ENCODE measurements at regions of chr12 and their contacts with region 1.

Region 1: GRCh38 chr12:55817346-55818139 is at the starts of genes ORMDL2 and SARNP:
- DNase-seq: peak; percentile 97
- H3K4me3 Mint-ChIP-seq: no peak within 1 kb of the TSS
- H3K27ac Mint-ChIP-seq: no peak within 1 kb of the TSS
- H3K4me1 Mint-ChIP-seq: peaks cover 33% of the 10 kb centered on the region
- H3K27me3 Mint-ChIP-seq: no peaks in the 10 kb centered on the region
- total RNA-seq, gene ORMDL2: 58.9 and 61.2 TPM in 2 replicates
- total RNA-seq, gene SARNP: 70.7 and 75.1 TPM in 2 replicates

Region 2: DNA sequence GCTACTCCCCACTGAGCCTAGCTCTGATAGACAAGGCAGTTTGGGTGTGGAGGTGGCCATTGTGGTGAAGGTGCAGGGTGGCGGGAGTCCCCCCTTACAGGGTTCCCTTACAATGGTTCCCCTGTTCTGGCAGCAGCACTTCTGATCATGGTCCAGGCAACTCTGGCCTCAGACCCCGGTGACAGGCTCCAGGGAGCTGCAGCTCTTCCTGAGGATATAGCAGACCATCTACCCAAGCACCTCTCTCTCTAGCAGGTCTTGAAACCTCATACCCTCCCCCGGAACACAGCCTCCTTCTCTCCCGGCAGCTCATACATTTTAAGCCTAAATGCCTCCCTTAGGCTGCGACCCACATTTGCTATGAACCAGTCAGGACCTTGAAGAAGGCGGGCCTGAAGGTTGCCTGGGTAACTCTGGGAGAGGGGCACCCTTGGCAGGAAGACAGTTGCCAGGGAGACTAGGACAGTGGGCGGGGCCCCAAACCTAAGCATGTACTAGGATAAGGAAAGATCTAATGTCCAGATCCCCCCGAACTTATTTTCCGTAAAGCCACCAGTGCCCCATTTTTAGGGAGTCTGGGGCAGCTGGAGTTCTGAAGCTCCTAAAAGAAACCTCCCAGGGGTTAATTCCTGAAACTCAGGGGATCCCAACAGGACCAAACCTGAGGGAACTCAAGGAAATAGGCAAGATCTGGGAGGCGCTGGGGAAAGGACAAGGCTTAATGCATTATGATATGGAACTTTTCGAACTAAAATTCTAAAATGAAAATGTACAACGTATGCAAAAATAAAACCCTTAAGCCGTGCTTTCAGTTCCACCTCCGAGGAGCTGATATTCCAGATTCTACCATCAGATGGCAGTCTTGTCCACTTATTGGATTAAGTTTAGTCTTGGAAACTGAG is 79.2 kb before region 1 on chr12:
- intact Hi-C with region 1: loop called (anchors 1 kb)
- DNase-seq: peak; percentile 73
- H3K4me3 Mint-ChIP-seq: peak overlapping the region; percentile 79
- H3K27ac Mint-ChIP-seq: peak overlapping the region; percentile 73
- H3K4me1 Mint-ChIP-seq: peaks cover 44% of the 10 kb centered on the region
- H3K27me3 Mint-ChIP-seq: peaks cover 3% of the 10 kb centered on the region

Region 3: DNA sequence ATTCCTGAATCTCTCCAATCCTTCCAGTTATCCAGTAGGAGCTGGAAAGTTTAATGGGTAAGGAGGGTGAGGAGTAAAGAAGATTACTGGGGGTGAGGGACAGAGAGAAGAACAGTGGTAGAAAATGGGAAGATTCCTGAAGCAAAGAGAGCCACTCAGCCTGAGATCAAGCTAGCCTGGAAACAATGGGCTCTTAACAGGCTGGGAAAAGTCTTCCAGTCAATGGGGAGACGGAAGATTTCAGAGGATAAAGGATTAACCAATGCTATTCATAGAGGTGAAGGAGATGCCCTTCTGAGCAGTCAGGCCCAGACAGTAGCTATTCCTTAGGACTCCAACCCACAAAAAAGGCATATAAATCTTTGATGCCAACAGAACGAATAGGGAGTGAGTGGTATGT is 59.8 kb before region 1 on chr12:
- intact Hi-C with region 1: no loop called
- DNase-seq: no peak
- H3K4me3 Mint-ChIP-seq: no peak overlapping the region
- H3K27ac Mint-ChIP-seq: peak overlapping the region; percentile 6
- H3K4me1 Mint-ChIP-seq: peaks cover 11% of the 10 kb centered on the region
- H3K27me3 Mint-ChIP-seq: no peaks in the 10 kb centered on the region

Region 4: DNA sequence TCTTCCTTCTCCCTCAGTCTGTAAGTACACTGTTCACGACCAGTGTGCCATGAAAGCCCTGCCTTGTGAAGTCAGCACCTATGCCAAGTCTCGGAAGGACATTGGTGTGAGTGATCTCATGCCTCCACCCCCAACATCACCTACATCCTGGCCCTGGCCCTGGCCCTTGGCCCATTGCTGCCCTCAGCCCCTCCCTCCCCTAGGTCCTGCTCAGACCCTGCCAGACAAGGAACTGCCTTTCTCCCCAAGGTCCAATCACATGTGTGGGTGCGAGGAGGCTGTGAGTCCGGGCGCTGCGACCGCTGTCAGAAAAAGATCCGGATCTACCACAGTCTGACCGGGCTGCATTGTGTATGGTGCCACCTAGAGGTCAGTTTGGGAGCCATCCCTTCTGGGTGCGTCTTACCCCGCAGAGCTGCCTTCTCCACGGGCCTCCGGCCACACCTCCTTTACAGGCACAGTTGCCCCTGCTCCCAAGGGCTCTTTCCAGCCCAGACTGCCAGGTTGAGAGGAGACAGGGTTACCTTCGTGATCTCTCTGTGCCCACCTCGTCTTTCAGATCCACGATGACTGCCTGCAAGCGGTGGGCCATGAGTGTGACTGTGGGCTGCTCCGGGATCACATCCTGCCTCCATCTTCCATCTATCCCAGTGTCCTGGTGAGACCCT is 122.7 kb after region 1 on chr12:
- intact Hi-C with region 1: loop called (anchors 1 kb)
- DNase-seq: peak; percentile 76
- H3K4me3 Mint-ChIP-seq: peak overlapping the region; percentile 9
- H3K27ac Mint-ChIP-seq: peak overlapping the region; percentile 18
- H3K4me1 Mint-ChIP-seq: peaks cover 56% of the 10 kb centered on the region
- H3K27me3 Mint-ChIP-seq: no peaks in the 10 kb centered on the region

Region 5: DNA sequence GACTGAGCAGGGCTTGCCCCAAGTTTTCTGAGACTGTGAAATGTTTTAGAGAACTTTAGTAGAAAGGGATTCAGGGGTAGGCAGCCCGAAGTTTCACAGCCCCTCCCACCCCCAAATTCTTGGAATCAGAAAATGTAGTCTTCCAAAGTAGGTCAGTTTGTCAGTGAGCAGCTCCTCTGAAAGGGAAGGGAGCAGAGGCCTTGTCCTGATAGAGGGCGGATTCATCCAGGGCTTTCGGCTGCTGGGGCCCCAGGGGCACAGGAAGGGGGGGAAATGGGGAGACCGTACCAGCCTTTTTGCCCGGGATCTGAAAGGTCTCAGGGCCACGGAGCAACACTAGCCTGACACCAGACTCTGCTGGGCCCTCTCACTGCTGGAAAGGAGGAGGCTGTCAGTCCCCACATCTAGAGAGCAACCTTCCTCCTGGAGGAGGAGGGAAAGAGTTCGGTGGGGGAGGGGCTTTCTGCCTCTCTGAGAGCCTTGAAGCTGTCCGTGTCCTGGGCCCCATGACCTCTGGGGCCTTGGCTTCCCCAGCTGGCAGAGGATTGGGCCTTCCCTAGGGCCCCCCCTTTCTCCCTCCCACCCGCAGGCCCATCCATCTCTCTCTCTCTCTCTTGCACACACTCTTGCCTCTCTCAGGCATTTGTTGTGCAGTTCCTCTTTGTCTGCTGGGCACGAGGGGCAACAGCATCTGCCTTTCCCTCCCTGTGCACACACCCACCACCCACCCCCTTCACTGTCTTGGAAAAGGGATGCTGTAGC is 203.1 kb after region 1 on chr12 and contains the start of gene IKZF4:
- intact Hi-C with region 1: loop called (anchors 5 kb)
- DNase-seq: no peak
- H3K4me3 Mint-ChIP-seq: peak within 1 kb of the TSS; percentile 97
- H3K27ac Mint-ChIP-seq: peak within 1 kb of the TSS; percentile 98
- H3K4me1 Mint-ChIP-seq: peaks cover 45% of the 10 kb centered on the region
- H3K27me3 Mint-ChIP-seq: no peaks in the 10 kb centered on the region
- total RNA-seq, gene IKZF4: 31.9 and 35.7 TPM in 2 replicates

Region 6: GRCh38 chr12:56127888-56128669 is 310.5 kb after region 1 on chr12 and contains the start of gene ESYT1:
- intact Hi-C with region 1: loop called (anchors 1 kb)
- DNase-seq: peak; percentile 98
- H3K4me3 Mint-ChIP-seq: peak within 1 kb of the TSS; percentile 97
- H3K27ac Mint-ChIP-seq: peak within 1 kb of the TSS; percentile 94
- H3K4me1 Mint-ChIP-seq: peaks cover 62% of the 10 kb centered on the region
- H3K27me3 Mint-ChIP-seq: no peaks in the 10 kb centered on the region
- total RNA-seq, gene ESYT1: 159 and 161 TPM in 2 replicates

Region 7: DNA sequence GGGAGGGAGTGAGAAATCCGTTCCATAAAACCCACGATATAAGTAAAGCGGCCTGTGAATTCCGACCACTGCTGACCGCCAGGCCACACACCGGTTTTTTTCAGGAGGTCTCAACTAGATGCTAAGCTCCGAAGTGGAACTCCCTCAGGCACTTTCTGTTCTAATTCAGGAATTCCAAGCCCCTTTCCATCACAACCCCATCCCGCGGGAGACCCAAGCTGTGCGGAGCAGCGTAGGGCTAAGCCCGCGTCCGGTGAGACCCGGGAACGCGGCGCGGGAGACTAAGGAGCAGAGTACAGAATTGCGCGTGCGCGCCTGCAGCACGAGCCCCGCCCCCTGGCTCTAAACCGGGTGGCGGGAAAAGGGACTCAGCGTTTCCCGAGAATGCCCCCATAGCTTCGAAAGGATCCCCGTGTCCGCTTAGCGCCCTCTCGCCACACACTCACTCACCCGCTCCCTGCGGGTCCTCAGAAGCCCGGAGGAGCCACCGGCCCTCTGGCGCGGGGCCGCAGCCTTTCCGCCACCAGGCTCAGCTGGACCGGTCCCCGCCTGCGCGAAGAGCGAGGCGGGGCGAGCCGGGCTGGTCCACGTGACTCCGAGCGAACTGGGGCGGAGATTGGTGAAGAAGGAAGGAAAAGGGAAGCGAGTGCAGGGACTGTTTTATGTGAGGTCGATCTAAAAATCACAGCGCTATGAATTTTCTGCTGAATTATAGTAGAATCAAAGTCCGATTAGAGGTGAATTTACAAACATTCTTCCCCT is 631.5 kb after region 1 on chr12 and contains the start of gene TIMELESS:
- intact Hi-C with region 1: loop called (anchors 5 kb)
- DNase-seq: peak; percentile 87
- H3K4me3 Mint-ChIP-seq: peak within 1 kb of the TSS; percentile 92
- H3K27ac Mint-ChIP-seq: peak within 1 kb of the TSS; percentile 85
- H3K4me1 Mint-ChIP-seq: peaks cover 27% of the 10 kb centered on the region
- H3K27me3 Mint-ChIP-seq: no peaks in the 10 kb centered on the region
- total RNA-seq, gene TIMELESS: 44.9 and 45.8 TPM in 2 replicates